ENCODE measurements at regions of chr1 and their contacts with region 1.

Region 1: DNA sequence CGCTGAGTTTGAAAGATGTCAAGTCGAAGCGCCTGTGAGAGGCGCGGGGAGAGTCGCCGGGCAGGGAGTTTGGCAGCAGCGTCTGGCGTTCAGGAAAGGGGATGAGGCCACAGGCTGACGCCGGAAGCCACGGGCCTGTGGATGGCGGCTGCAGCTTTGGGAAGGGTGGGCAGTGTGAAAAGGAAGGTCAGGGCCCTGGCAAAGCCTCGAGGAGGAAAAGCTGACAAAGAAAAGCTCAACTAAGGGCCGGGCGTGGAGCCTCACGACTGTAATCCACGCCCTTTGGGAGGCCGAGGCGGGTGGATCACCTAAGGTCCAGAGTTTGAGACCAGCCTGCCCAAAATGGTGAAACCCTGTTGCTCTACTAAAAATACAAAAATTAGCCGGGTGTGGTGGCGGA is 25.2 kb upstream of the COX20 start:
- DNase-seq: no peak
- H3K4me3 ChIP-seq: no peak overlapping the region
- CTCF ChIP-seq: no peak

Region 2: DNA sequence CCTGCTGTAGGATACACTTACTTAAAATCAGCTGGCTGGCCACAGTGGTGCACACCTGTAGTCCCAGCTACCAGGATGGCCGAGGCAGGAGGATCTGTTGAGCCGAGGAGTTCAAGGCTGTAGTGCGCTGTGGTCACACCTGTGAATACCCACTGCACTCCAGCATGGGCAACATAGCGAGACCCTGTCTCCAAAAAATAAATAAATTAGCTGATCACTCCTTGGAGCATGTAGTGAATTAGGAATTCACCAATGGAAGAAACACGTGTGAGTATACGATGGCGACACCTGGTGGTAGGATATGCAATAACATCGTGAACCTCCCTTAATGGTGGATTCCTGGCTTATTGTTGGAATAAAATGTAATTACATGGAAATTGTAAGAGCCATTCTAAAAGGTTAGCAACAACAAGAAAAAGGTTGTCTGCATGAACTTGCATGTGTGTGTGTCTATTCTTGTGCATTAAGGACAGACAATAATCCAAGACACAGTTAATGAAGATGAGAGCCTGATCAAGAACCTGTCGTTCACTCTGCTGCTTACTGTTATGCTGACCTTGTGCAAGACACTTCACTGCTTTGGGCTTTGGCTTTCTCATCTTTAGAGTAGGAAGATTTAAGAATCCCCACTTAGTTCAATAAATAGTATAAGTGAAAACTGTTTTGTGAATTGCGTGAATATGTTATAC is 13.4 kb before region 1 on chr1:
- CTCF ChIA-PET with region 1: interaction called, 20 read pairs
- POLR2A ChIA-PET with region 1: no interaction called
- DNase-seq: no peak
- H3K4me3 ChIP-seq: no peak overlapping the region
- CTCF ChIP-seq: peak; percentile 72

Region 3: GRCh38 chr1:244839656-244840055 is 29.4 kb after region 1 on chr1:
- CTCF ChIA-PET with region 1: no interaction called
- POLR2A ChIA-PET with region 1: no interaction called
- DNase-seq: no peak
- H3K4me3 ChIP-seq: no peak overlapping the region
- CTCF ChIP-seq: no peak

Region 4: DNA sequence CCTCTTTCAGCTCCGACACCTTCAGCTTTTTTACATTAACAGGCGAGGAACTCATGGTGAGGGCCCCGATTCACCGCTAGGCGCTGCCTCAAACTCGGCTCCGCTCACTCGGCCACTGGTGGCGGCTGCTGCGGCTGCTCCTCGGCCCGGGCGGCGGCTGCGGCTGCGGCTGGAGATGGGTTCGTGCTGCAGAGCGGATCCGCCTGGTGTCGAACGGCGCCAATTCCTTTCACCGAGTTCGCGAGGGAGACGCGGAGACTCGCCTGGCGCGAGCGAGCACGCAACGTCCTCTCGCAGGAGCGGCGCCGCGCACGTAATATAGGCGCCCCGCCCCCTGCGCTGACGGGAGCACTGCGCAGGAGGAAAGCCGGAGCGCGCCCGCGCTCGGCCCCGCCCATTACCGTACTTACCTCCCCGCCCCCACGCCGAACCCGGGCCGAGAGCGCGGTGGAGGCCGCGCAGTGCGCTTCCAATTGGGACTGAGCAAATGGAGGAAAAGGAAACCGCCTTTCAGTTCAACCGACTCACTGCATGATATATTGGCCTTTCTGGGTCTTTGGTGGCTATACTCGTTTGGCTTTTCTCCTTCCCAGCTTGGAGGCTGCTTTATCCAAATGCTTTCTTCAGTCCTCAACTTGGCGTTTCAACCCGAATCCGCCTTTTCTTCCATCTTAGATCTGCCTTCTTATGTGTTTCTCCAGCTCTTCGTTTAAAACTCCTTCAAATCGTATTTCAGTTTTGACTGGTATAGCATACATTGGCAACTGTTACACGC is 54.2 kb after region 1 on chr1 and contains the start of gene HNRNPU:
- CTCF ChIA-PET with region 1: no interaction called
- POLR2A ChIA-PET with region 1: no interaction called
- DNase-seq: peak; percentile 73
- H3K4me3 ChIP-seq: peak within 1 kb of the TSS; percentile 95
- CTCF ChIP-seq: peak; percentile 30